ENCODE measurements at regions of chr7 and their contacts with region 1.

Region 1: GRCh38 chr7:32495298-32496176 is at the start of gene AVL9:
- DNase-seq: peak; percentile 99
- ATAC-seq: peak; percentile 100
- total RNA-seq, gene AVL9: 14.4 TPM

Region 2: DNA sequence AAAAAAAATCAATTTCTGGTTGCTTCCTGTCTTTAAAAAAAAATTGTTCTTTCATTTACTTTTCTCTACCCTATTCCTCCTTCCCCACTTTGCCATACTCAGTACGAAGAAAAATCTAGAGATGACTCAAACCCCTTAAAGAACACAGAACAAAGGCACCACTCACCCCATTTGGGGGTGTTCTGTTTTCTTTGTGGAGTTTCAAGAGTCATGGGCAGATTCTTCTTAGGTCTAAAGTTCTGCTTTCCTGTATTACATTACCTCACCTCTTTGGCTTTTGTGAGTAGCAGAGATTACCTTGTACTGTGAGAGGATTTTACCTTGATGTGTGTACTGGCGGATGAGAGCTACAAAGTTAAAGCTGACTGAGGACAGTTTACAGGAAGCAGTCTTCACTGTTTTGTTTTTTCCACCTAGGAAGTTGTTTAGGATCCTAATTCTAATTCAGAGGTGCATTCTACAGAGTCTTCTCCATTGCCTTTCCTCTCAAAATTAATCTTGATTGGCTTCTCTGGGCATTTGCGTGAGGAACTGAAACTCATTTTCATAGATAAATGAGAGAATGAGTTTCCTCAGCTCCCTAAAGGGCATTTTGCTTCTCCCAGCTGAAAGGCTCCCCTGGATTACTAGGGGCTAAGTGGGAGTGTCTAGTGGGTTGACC is 20.5 kb after region 1 on chr7:
- intact Hi-C with region 1: no loop called
- DNase-seq: no peak
- ATAC-seq: no peak

Region 3: DNA sequence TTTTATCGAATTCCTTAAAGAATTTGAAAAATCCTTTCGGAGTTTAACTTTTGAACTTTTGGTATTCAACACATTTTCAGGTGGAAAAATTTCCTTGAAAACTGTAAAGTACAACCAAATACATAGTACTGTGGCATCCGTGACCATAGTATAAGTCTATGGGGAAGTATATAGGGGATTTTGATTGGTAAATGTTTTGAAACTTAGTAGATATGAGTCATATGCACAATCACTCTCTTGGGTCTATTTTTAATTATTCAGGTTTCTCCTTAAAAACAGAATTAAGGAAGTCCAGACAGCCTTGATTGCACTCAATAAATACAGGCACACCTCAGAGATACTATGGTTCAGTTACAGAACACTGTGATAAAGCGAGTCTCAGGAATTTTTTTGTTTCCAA is 63.9 kb after region 1 on chr7:
- intact Hi-C with region 1: no loop called
- DNase-seq: no peak
- ATAC-seq: no peak

Region 4: DNA sequence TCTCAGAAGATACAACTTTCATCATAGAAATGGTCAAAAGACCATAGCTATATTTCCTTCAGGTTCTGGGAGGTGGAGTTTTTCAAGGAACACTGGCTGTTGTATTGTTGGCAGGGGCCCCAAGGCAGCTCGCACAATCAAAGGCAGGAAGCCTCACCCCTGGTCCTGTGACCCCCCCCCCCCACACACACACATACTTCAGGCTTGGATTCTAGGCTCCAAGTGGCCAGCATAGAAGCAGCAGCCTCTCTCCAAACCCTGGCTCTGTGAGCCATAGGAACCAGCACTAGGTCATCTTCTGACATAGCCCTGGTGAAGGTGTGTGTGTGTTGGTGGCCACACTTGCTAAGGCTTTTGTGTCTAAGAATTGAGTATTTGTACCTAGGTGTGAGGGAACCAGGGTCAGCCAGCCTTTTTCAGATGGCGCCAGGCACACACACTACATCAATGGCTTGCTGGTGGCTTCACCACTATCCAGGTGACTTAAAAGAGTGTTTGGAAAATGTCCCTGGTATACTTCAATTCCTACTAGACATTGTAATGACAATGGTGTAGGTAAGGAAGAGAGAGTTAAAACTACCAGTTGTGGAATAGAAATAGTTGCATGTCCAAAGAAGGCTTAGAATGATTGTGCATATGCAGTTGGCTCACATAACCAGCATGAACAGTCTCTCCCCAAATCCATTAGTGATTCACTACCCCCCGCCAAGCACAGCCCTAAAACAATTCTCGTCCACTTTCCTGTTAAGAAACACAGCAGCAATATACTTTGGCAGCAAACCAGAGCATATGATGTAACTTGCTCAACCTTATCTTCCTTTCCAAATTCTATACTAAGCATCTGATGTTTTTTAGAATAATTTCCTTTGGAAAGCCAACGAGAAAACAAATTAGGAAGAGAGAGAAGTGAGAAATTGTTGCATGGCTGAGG is 91.0 kb after region 1 on chr7:
- intact Hi-C with region 1: loop called (anchors 2 kb)
- DNase-seq: no peak
- ATAC-seq: peak; percentile 26

Measured in Right ventricle myocardium inferior (tissue), 1 donor.